HCT116 (cell line): ENCODE measurements at regions of chr3 and their contacts with region 1.

Region 1: DNA sequence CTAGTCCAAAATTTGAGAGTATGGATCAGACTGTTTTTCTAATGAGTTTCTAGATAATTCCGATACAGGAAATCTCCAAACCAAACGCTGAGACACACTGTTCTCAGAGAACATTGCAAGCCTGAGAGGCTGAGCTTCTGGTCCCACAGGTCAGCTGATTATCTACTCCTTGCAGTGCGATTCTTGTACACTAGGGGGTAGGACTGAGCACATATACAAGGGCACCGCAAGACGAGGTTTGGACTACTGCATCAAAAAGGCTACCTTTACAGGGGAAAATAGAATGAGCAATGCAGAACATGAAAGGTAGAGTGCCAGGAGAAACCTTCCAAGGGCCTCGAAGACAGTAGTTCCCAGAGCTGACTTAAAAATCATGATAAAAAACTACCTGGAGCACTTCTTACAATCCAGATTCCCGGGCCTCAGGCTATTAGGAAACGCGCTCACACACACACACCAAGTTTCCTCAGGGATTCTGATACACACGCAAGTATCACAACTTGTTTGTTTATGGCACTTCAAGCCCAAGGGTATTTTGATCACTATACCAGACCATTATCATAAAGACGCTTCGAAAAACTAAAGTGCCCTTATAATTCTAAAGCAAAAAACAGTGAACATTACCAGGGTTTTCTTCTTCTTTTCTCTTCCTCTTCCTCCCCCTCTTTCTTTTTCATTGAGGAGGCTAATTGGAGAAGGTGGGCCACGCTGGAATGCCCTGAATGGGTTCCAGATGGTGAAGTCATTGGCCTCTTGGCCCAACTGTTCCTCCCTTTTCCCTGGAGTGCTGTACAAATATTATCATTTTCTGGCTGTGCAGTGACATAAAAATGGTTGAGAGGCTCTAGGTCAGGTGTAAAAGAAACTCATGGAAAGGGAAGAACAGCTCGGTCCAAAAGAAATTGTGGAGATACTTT is 61.8 kb downstream of the SLC12A8 start:
- DNase-seq: peak; percentile 66
- ATAC-seq: peak; percentile 97
- H3K4me3 ChIP-seq: no peak overlapping the region
- H3K27ac ChIP-seq: no peak overlapping the region
- H3K4me1 ChIP-seq: peaks cover 0 to 7% of the 10 kb centered on the region in 2 experiments; a peak in 1 of 4 replicates
- H3K27me3 ChIP-seq: no peaks in the 10 kb centered on the region
- CTCF ChIP-seq: peak; percentile 62 to 90 (median 83)
- POLR2A ChIP-seq: no peak
- RAD21 ChIP-seq: peak; percentile 69

Region 2: DNA sequence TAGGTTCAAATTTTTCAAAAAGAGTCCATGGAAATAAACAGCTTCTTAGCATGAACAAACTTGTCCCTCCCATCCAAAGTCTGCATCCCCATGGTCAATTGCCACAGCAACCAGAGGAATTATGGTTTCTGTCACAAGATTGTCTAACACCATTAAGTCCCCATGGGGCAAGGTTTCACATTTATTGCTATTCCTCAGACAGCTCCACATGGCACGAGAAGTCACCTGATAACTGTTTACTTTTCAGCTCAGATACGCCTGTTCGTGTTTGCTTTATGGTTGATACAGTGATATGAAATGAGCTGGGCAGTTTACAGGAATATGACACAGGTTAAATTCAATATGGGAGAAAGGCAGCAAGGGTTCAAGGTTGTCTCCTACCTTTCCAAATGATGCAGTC is 178.3 kb before region 1 on chr3:
- CTCF ChIA-PET with region 1: no interaction called
- POLR2A ChIA-PET with region 1: no interaction called
- RAD21 ChIA-PET with region 1: no interaction called
- intact Hi-C with region 1: no loop called
- DNase-seq: no peak
- ATAC-seq: no peak
- H3K4me3 ChIP-seq: no peak overlapping the region
- H3K27ac ChIP-seq: no peak overlapping the region
- H3K4me1 ChIP-seq: peaks cover 0 to 10% of the 10 kb centered on the region in 2 experiments; a peak in 2 of 4 replicates
- H3K27me3 ChIP-seq: no peaks in the 10 kb centered on the region
- CTCF ChIP-seq: no peak
- POLR2A ChIP-seq: no peak
- RAD21 ChIP-seq: no peak

Region 3: GRCh38 chr3:124995460-124995994 is 155.3 kb before region 1 on chr3:
- CTCF ChIA-PET with region 1: no interaction called
- POLR2A ChIA-PET with region 1: no interaction called
- RAD21 ChIA-PET with region 1: no interaction called
- intact Hi-C with region 1: loop called (anchors 2 kb)
- DNase-seq: peak; percentile 34
- ATAC-seq: peak; percentile 98
- H3K4me3 ChIP-seq: no peak overlapping the region
- H3K27ac ChIP-seq: no peak overlapping the region
- H3K4me1 ChIP-seq: no peaks in the 10 kb centered on the region
- H3K27me3 ChIP-seq: no peaks in the 10 kb centered on the region
- CTCF ChIP-seq: peak; percentile 65 to 84 (median 79)
- POLR2A ChIP-seq: no peak
- RAD21 ChIP-seq: peak; percentile 94